A673 (cell line): ENCODE measurements at regions of chr9 and their contacts with region 1.

Region 1: DNA sequence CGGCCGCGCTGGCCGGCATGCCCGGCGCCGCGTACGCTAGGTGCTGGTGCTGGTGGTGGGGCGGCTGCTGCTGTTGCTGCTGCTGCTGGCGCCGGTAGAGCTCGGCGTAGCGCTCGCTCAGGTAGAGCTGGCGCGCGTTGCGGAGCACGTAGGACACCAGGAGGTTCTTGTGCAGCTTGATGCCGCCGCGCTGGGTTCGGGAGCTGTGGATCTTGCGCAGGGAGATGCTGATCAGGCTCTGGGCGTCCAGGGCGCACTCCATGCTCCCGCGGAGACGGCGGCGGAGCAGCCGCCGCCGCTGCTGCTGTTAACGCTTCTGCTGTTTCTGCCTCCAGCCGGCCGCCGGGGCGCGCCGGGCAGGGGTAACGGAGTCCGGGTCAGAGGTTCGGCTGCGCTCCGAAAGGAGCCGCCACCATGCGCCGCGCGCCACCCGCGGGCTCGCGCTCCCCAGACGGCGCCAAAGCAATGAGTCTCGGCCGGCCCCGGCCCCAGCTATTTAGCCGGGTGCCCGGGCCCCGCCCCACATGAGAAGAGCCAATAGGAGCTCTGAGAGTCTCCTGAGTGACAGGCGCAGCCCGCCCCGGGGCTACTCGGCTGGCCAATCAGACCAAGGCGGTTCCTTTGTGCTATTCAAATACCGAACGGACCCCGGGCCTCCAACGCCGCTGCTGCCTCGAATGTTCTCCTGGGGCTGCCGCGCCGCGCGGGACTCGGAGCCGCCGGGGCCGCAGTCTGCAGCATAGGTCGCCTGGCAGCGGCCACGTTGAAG is at the start of gene IER5L:
- DNase-seq: peak; percentile 97
- H3K4me3 ChIP-seq: peak within 1 kb of the TSS; percentile 66
- H3K27ac ChIP-seq: peak within 1 kb of the TSS; percentile 93
- H3K4me1 ChIP-seq: peaks cover 24% of the 10 kb centered on the region
- H3K27me3 ChIP-seq: no peaks in the 10 kb centered on the region
- CTCF ChIP-seq: no peak
- total RNA-seq, gene IER5L: 12.1 and 14.0 TPM in 2 replicates

Region 2: DNA sequence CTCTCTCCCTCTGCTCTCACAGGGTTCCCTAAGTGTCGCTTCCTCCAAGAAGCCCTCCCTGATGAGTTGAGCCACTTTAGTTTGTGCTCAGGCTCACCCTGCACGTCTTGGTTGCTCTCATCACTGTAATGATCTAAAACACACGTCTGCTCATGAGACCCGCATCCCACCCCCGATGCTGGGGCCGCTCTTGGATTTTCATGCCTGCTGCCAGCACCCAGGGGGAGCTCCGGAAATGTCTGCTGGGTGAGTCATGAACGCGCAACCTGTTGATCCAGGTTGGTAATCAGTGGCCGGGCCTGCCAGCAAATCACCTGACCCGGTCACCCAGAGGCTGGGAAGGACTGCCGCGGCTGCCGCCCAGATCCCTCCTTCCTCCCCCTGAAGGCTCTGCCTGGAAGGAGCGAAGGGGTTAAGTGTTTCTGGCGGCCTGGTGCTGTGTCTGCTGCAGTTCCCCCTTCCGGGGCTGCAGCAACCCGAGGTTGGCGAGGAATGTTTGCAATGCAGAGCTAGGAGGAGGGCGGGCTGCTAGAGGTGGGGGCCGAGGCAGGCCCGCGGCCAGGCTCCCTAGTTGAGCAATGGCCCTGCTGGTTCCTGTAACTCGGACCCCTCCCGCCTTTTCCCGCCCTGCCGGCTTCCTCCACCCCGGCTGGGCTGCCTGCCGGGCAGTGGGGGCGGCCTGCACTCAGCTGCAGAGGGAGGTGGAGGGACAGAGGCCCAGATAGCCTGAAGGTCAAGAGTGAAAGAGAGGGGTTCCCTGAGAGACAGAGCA is 156.2 kb after region 1 on chr9:
- CTCF ChIA-PET with region 1: interaction called, 4 read pairs
- POLR2A ChIA-PET with region 1: no interaction called
- intact Hi-C with region 1: loop called (anchors 5 kb)
- DNase-seq: peak; percentile 88
- H3K4me3 ChIP-seq: peak overlapping the region; percentile 10
- H3K27ac ChIP-seq: peak overlapping the region; percentile 85
- H3K4me1 ChIP-seq: peaks cover 44% of the 10 kb centered on the region
- H3K27me3 ChIP-seq: no peaks in the 10 kb centered on the region
- CTCF ChIP-seq: no peak

Region 3: DNA sequence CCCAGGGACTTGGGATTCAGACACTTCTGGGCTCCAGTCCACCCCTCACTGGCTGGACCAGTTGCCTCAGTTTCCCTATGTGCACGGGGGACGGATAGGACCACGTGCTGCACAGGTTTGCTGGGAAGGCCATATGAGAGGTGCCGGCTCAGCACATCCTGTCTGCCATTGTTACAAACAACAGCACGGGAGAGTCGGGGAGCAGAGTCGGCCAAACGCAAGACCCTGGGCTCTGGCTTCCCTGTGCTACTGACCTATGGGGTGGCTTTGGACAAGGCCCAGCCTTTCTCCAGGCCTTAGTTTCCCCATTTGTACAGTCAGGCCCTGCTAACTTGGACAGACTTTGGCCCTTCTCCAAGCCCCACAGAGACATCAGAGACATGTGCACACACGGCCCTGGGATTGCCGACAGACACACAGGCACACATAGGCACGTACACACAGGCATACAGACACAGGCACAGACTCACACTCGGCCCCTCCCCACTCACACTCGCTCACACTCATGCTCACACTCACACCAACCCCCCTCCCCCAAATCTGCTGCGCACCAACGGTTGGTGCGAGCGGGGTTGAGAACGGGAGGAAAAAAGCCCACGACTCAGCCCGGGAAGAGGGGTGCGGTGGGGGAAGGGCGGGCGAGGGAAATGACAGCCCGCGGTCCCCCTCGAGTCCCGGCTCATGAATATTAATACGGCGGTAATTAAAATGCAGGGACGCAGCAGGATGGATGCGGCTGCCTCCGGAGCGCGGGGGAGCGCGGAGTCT is 309.9 kb after region 1 on chr9:
- CTCF ChIA-PET with region 1: interaction called, 3 read pairs
- POLR2A ChIA-PET with region 1: no interaction called
- intact Hi-C with region 1: loop called (anchors 5 kb)
- DNase-seq: peak; percentile 92
- H3K4me3 ChIP-seq: peak overlapping the region; percentile 48
- H3K27ac ChIP-seq: peak overlapping the region; percentile 98
- H3K4me1 ChIP-seq: peaks cover 71% of the 10 kb centered on the region
- H3K27me3 ChIP-seq: no peaks in the 10 kb centered on the region
- CTCF ChIP-seq: no peak

Region 4: DNA sequence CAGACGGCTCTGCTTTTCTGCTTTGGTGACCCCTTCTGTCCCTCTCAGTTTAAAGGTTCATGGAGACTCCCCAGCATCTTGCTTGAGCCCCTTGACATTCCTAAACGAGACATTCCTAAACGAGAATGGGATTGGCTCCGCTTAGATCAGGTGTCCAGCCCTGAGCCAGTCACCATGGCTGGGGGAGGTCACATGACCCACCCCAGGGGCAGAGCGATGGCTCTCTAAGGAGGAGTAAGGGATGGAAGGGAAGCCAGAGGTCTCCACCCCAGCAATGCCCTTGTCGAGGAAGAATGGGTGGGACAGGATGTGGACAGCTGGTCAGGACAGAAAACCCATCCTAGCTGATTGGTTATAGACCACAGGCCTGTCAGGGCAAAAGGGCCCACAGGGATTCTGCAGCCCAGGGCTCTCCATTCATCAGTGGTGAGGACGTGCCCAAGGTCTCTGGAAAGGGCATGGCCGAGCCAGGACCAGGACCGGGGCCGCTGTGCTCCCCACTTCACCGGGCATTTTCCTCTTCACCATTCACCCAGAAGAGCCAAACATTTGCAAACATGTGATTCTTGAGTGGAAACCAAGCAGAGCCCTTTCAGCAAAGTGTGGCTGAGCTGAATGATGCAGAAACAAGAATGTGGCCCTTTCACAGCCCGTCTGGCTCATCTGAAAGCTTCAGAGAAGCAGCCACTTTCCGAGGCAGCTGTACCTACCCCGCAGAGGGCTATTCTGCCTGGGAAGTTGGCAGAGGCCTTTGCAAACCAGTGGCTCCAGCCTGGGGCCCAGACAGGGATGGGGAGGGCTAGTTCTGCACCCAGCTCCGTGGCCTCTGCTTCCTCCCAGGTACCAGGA is 1898.6 kb after region 1 on chr9:
- CTCF ChIA-PET with region 1: interaction called, 10 read pairs
- POLR2A ChIA-PET with region 1: no interaction called
- intact Hi-C with region 1: no loop called
- DNase-seq: no peak
- H3K4me3 ChIP-seq: no peak overlapping the region
- H3K27ac ChIP-seq: no peak overlapping the region
- H3K4me1 ChIP-seq: no peaks in the 10 kb centered on the region
- H3K27me3 ChIP-seq: no peaks in the 10 kb centered on the region
- CTCF ChIP-seq: no peak